ENCODE measurements at regions of chr1 and their contacts with region 1.

Region 1: DNA sequence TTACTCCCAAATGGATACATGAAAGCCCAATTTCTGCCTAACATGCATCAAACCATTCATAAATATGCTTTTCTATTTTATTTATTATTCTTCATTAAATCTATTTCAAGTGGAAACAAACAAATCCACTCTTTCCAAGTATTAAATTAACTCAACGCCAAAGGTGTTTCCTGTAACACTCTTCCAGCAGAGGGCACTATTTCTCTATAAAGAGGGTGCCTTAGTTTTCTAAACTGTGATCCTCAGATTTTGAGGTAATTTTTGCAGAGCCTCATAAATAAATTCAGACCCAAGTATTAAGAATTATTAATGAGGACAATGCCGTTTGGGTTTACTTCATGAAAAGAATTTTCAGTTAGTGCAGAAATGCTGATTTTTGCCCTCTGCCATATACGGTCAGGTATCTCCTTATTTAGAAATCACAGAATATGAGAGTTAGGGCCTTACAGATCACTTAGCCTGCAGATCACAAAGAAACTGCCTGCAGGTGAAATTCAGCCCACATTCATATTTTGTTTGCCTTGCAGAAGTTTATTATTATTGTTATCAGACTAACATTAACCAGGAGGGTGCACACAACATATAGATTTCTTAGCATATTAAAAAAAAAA is 40.1 kb upstream of the MYSM1 start:
- DNase-seq: peak in 3 of 9 experiments; percentile 35 to 76 (median 67)
- ATAC-seq: peak; percentile 49
- H3K4me3 ChIP-seq: no peak overlapping the region
- H3K4me3 Mint-ChIP-seq: no peak overlapping the region
- H3K27ac ChIP-seq: no peak overlapping the region
- H3K27ac Mint-ChIP-seq: no peak overlapping the region
- H3K4me1 ChIP-seq: no peaks in the 10 kb centered on the region
- H3K4me1 Mint-ChIP-seq: peaks cover 5% of the 10 kb centered on the region
- H3K27me3 ChIP-seq: no peaks in the 10 kb centered on the region
- H3K27me3 Mint-ChIP-seq: peaks cover 2% of the 10 kb centered on the region
- CTCF ChIP-seq: peak; percentile 98

Region 2: DNA sequence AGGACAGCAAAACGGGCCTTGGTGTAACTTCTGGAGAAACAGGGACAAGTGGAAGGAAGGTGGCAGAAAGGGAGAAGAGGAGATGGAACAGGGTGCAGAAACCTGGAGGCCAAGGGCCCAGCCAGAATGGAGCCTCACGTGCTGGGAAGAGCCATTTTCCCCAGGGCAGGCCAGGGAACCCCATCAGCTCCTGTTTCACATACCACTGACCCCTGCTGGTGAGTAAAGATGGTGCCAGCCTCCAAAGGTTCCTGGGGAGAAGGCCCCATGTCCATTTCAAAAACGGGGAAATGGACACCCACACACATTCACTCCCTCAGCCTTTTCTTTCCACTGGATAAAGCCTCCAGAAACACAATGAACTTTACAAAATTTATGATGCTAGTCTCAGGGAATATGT is 101.5 kb after region 1 on chr1:
- CTCF ChIA-PET with region 1: no interaction called
- POLR2A ChIA-PET with region 1: no interaction called
- intact Hi-C with region 1: loop called in 1 of 2 experiments (anchors 5 kb)
- DNase-seq: peak in 2 of 9 experiments; percentile 43 to 57
- ATAC-seq: no peak
- H3K4me3 ChIP-seq: no peak overlapping the region
- H3K4me3 Mint-ChIP-seq: no peak overlapping the region
- H3K27ac ChIP-seq: no peak overlapping the region
- H3K27ac Mint-ChIP-seq: peak overlapping the region; percentile 49
- H3K4me1 ChIP-seq: no peaks in the 10 kb centered on the region
- H3K4me1 Mint-ChIP-seq: peaks cover 6% of the 10 kb centered on the region
- H3K27me3 ChIP-seq: no peaks in the 10 kb centered on the region
- H3K27me3 Mint-ChIP-seq: no peaks in the 10 kb centered on the region
- CTCF ChIP-seq: peak; percentile 22

Measured in CD8-positive, alpha-beta T cell (primary cell).